A549 (cell line): ENCODE measurements at regions of chr21 and their contacts with region 1.

Region 1: DNA sequence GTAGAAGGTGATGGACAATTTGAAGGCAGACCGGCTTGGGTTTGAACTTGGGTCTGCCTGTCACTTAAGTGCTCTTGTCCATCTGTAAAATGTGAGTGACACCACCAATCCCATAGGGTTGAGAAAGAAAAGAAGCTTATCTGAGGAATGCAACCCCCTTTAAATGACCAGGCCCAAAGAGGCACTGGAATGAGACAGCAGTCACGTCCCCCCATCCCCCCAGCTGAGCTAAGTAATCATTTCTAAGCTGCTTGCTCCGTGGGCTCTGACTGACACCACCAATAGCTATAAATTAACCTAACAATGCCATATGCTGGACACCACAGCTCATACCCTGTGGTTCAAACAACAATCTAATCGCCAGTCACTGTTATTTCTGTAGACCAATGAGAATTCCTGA is 15.1 kb downstream of the LCA5L start:
- DNase-seq: no peak
- ATAC-seq: no peak
- H3K4me3 ChIP-seq: no peak overlapping the region
- H3K27ac ChIP-seq: no peak overlapping the region
- H3K4me1 ChIP-seq: no peaks in the 10 kb centered on the region
- CTCF ChIP-seq: no peak
- EP300 ChIP-seq: no peak
- POLR2A ChIP-seq: no peak
- RAD21 ChIP-seq: no peak

Region 2: DNA sequence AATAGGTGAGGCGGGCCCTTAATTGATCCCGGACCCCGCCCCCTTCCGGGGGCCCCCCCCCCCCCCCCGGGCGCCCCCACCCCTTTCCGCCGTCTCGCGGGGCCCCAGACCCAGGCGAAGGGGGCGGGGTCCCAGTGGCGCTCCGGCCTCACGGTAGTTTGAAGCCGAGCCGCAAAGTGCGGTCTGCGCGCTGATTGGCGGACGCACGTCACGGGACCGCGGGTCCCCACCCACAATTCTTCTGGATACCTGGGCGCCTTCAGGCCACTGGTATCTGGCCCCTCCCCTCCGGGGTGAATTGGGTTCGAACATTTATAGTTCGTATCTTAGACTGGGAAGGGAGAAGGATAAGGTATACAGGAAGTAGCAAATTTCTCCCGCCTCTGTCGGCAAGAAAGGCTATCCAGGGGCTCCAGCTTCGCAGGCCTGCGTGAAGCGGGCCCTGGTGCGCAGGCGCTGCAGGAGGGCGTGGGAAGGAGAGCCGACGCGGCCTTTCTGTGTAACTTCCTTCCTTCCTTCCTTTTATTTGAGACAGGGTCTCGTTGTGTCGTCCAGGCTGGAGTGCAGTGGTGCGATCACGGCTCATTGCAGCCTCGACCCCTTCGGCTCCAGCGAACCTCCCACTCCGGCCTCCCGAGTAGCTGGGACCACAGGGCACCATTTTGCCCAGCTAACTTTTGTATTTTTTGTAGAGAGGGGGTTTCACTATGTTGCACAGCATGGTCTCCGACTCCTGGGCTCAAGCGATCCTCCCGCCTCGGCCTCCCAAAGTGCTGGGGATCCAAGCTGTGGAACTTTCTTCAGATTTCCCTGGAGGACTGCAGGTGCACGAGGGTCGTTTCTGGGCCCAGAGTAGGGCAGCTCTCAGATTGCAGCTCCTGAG is 81.0 kb before region 1 on chr21:
- CTCF ChIA-PET with region 1: no interaction called
- POLR2A ChIA-PET with region 1: no interaction called
- DNase-seq: peak; percentile 85 to 94
- ATAC-seq: peak; percentile 92 to 96
- H3K4me3 ChIP-seq: peak overlapping the region; percentile 59
- H3K27ac ChIP-seq: peak overlapping the region; percentile 91 to 93
- H3K4me1 ChIP-seq: peaks cover 26% of the 10 kb centered on the region; the same call in 2 of the 3 replicates
- CTCF ChIP-seq: no peak
- EP300 ChIP-seq: no peak
- POLR2A ChIP-seq: peak; percentile 64
- RAD21 ChIP-seq: no peak

Region 3: GRCh38 chr21:39441502-39442475 is 11.3 kb after region 1 on chr21:
- CTCF ChIA-PET with region 1: interaction called, 29 read pairs
- POLR2A ChIA-PET with region 1: no interaction called
- DNase-seq: peak; percentile 36 to 46
- ATAC-seq: peak in 1 of 2 experiments; percentile 72; a peak in 3 of 6 replicates
- H3K4me3 ChIP-seq: no peak overlapping the region
- H3K27ac ChIP-seq: no peak overlapping the region
- H3K4me1 ChIP-seq: 0 out of 3 replicates have a peak, but pooled peaks cover 9% of the 10 kb centered on the region
- CTCF ChIP-seq: peak; percentile 45; the same call in 2 of the 3 replicates
- EP300 ChIP-seq: no peak
- POLR2A ChIP-seq: no peak
- RAD21 ChIP-seq: peak; percentile 47 to 57

Region 4: GRCh38 chr21:40575976-40576375 is 1145.5 kb after region 1 on chr21:
- CTCF ChIA-PET with region 1: no interaction called
- POLR2A ChIA-PET with region 1: no interaction called
- DNase-seq: no peak
- ATAC-seq: no peak
- H3K4me3 ChIP-seq: no peak overlapping the region
- H3K27ac ChIP-seq: no peak overlapping the region
- H3K4me1 ChIP-seq: no peaks in the 10 kb centered on the region
- CTCF ChIP-seq: no peak
- EP300 ChIP-seq: no peak
- POLR2A ChIP-seq: no peak
- RAD21 ChIP-seq: no peak